ENCODE measurements at regions of chr3 and their contacts with region 1.

Region 1: DNA sequence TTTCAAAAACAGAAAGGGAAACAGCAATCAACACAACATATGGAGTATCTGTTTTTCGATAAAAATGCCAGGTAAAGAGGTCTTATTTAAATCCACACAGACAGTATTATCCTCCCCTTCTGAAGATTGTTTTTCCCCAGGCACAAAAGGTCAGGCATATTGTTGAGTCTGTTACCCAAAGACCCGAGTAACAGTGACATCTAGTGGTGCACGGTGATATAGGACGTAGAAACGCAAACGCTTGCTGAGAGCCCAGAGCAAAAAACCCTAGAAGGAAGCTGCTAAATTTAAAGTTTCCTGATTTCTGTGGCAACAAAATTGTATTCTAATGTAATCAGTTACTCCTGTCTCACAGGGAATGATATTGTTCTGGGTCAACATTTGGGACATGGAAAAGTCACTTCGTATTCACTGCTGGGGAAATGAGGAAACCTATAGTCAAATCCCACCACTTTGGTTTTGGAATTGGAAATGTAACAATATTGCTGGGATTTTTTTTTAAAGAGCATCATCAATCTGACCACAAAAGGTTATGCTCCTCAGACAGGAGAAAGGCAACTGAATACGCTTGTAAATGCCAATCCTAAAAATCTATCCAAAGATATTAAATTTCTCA is 312.7 kb upstream of the CCDC54 start:
- DNase-seq: peak; percentile 29
- ATAC-seq: peak; percentile 93

Region 2: GRCh38 chr3:106305882-106306435 is 758.6 kb before region 1 on chr3:
- intact Hi-C with region 1: no loop called
- DNase-seq: no peak
- ATAC-seq: peak; percentile 38

Region 3: GRCh38 chr3:106824856-106825255 is 239.7 kb before region 1 on chr3:
- intact Hi-C with region 1: loop called (anchors 10 kb)
- DNase-seq: no peak
- ATAC-seq: peak; percentile 88

Measured in left ventricle myocardium superior (tissue), 1 donor.